A549 (cell line): ENCODE measurements at regions of chr5 and their contacts with region 1.

Region 1: GRCh38 chr5:69093771-69094482 is at the start of gene SLC30A5:
- DNase-seq: peak; percentile 98 to 100
- ATAC-seq: peak; percentile 99
- H3K4me3 ChIP-seq: peak within 1 kb of the TSS; percentile 89
- H3K27ac ChIP-seq: peak within 1 kb of the TSS; percentile 94 to 98
- H3K4me1 ChIP-seq: peaks cover 20% of the 10 kb centered on the region
- CTCF ChIP-seq: peak; percentile 85
- EP300 ChIP-seq: no peak
- POLR2A ChIP-seq: peak; percentile 96
- RAD21 ChIP-seq: peak; percentile 93
- polyA plus RNA-seq, gene SLC30A5: 74.6 and 79.8 TPM in 2 replicates

Region 2: DNA sequence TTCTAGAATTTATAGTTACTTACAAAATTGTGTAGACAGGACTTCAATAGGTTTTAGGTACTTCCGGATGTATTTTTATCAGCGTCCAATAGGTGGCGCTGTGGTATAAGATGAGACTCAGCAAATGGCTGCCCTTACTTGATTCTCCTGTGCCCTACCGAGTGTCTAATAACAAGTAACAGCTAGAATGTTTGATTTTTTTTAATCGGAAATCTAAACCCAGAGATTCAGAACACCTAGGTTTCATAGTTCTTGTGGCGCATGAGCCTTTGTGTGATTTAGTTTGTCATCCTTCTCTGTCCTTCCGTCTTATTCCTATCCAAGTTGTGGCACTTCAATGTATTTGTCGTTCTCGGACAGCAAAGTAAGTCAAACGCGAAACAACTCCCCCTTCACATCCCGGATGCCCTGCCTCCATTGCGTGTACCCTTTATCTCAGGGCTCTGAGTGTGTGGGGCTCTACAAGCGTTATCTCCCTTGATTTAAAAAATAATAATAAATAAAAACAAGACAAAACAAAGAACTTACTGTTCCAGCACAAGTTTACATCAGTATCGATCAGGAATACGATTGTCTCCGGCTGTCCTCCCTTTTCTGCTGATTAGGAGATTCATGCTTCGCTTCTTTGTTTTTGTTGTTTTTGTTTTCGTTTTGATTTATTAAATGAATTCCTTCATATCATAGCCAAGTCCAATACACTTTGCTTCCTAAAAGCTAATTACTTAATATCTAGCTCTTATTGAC is 50.8 kb before region 1 on chr5:
- CTCF ChIA-PET with region 1: interaction called, 10 read pairs
- POLR2A ChIA-PET with region 1: no interaction called
- DNase-seq: peak; percentile 89 to 95
- ATAC-seq: peak; percentile 95
- H3K4me3 ChIP-seq: peak overlapping the region; percentile 55
- H3K27ac ChIP-seq: peak overlapping the region; percentile 73 to 75
- H3K4me1 ChIP-seq: peaks cover 10% of the 10 kb centered on the region
- CTCF ChIP-seq: peak; percentile 95
- EP300 ChIP-seq: no peak
- POLR2A ChIP-seq: no peak
- RAD21 ChIP-seq: peak; percentile 93 to 94

Region 3: GRCh38 chr5:69105996-69106906 is 12.3 kb after region 1 on chr5:
- CTCF ChIA-PET with region 1: interaction called, 24 read pairs
- POLR2A ChIA-PET with region 1: interaction called, 19 read pairs
- DNase-seq: no peak
- ATAC-seq: no peak
- H3K4me3 ChIP-seq: no peak overlapping the region
- H3K27ac ChIP-seq: no peak overlapping the region
- H3K4me1 ChIP-seq: peaks cover 11% of the 10 kb centered on the region; the same call in 1 of the 3 replicates
- CTCF ChIP-seq: no peak
- EP300 ChIP-seq: no peak
- POLR2A ChIP-seq: no peak
- RAD21 ChIP-seq: no peak

Region 4: GRCh38 chr5:69134126-69134525 is 40.2 kb after region 1 on chr5:
- CTCF ChIA-PET with region 1: no interaction called
- POLR2A ChIA-PET with region 1: no interaction called
- DNase-seq: no peak
- ATAC-seq: no peak
- H3K4me3 ChIP-seq: no peak overlapping the region
- H3K27ac ChIP-seq: no peak overlapping the region
- H3K4me1 ChIP-seq: peaks cover 19% of the 10 kb centered on the region
- CTCF ChIP-seq: no peak
- EP300 ChIP-seq: no peak
- POLR2A ChIP-seq: no peak
- RAD21 ChIP-seq: no peak

Region 5: GRCh38 chr5:69166686-69167492 is 73.0 kb after region 1 on chr5 and contains the start of gene CCNB1:
- CTCF ChIA-PET with region 1: interaction called, 16 read pairs
- POLR2A ChIA-PET with region 1: no interaction called
- DNase-seq: peak; percentile 98 to 99
- ATAC-seq: peak; percentile 99 to 100
- H3K4me3 ChIP-seq: peak within 1 kb of the TSS; percentile 77
- H3K27ac ChIP-seq: peak within 1 kb of the TSS; percentile 85 to 89
- H3K4me1 ChIP-seq: peaks cover 36% of the 10 kb centered on the region
- CTCF ChIP-seq: no peak
- EP300 ChIP-seq: no peak
- POLR2A ChIP-seq: peak; percentile 52
- RAD21 ChIP-seq: no peak
- polyA plus RNA-seq, gene CCNB1: 196 and 236 TPM in 2 replicates

Region 6: DNA sequence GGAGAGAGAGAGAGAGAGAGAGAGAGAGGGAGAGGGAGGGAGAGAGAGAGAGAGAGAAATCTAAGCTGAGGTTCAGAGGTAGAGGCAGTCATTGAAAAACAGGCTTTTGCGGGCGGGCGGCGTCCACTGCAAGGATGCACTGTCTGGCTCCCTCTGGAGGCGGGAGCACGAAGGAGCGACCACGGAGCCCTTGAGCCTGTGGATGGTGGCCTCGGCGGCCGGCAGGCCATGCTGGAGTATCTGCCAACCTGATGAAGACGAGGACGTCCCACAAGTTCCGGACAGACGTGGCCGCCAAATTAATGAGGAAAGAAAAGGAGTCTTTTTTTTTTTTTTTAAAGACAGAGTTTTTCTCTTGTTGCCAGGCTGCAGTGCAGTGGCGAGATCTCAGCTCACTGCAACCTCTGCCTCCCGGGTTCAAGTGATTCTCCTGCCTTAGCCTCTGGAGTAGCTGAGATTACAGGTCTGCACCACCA is 240.9 kb after region 1 on chr5:
- CTCF ChIA-PET with region 1: interaction called, 42 read pairs
- POLR2A ChIA-PET with region 1: interaction called, 5 read pairs
- DNase-seq: peak; percentile 75 to 85
- ATAC-seq: peak; percentile 93 to 94
- H3K4me3 ChIP-seq: no peak overlapping the region
- H3K27ac ChIP-seq: no peak overlapping the region
- H3K4me1 ChIP-seq: peaks cover 12% of the 10 kb centered on the region; the same call in 2 of the 3 replicates
- CTCF ChIP-seq: peak; percentile 69
- EP300 ChIP-seq: no peak
- POLR2A ChIP-seq: no peak
- RAD21 ChIP-seq: peak; percentile 71 to 76